ENCODE measurements at regions of chr4 and their contacts with region 1.

Region 1: DNA sequence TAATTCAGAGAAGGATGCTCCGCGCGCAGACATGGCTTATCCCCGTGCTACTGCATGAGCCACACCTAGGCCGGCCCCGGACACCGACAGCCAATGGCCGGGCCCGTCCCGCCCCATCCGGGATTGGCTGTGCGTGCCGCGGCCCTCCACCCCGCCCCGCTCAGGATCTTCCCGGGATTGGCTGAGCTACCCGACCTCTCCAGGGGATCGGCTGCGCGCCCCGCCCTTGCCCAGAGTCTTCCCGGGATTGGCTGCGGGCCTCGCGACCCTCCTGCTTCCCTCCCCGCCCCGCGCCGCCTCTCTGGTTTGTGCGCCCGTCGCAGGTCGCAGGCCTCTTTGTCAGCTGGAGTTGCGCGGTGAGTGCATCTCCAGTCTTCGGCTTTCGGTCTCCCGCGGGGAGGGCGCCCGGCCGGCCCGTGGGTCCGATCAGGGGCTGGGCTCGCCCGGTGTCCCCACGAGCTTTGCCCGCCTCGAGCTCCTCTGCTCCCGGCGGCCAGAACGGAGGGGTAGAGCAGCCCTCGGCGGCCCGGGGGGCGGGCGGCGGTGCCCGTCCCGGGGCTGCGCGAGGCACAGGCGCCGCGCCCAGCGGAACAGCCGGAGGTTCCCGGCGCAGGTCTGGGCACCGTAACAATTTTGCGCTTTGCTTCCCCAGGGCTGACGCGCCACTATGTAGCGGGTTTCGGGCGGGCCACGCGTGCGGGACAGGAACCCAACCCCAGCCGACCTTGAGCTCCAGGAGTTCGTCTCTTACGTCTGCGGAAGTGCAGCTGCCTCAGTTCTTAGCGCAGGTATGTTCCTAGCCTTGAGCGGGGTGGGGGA is 38.8 kb downstream of the ERVMER34-1 start:
- DNase-seq: peak; percentile 81 to 97 (median 95)
- ATAC-seq: peak; percentile 96
- H3K4me3 ChIP-seq: peak overlapping the region; percentile 73
- H3K4me3 Mint-ChIP-seq: peak overlapping the region; percentile 82 to 96 (median 92)
- H3K27ac ChIP-seq: peak overlapping the region; percentile 81
- H3K27ac Mint-ChIP-seq: peak overlapping the region; percentile 87 to 98 (median 96)
- H3K4me1 ChIP-seq: peaks cover 23 to 24% of the 10 kb centered on the region in 2 donors
- H3K4me1 Mint-ChIP-seq: peaks cover 23 to 46% (median 38%) of the 10 kb centered on the region in 7 donors
- H3K27me3 ChIP-seq: no peaks in the 10 kb centered on the region
- H3K27me3 Mint-ChIP-seq: peaks cover 0 to under 1% (median 0%) of the 10 kb centered on the region in 5 donors

Region 2: DNA sequence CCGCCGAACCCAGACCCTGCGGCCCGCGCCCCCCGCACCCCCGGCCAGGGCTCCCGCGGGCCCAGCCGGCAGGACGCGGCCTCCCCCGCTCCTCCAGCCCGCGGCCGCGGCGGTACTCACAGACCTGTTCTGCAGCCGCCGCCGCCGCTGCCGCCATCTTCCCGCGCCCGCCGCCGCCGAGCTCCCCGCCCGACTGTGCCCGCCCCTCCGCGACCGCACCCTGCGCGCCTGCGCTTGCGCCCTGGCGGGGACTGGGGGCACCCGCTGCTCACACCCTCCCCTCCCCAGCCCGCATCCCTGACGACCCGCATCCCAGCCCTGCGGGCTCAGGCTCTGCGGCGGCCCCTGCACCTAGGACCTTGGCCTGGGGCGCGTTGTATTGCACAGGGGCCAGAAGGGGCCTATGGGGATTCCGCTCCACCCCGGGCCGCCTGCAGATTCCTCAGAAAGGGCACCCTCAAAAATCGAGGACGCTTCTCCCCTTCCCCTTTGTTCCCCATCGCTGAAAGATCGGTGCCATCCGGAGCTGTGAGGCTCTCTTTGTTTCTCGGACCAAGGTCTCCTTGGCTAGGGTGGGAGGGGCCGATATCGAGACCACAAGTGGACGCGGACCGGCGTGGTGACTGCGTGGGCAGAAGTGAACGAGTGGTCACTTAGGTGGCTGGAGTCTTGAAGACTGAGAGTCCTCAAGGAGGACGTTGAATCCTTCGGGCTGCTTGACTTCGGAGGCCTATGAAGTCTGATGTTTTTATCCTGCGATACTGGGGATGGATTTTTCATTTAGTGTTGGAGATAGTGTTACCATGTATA is 674.1 kb before region 1 on chr4 and contains the start of gene SGCB:
- CTCF ChIA-PET with region 1: no interaction called
- POLR2A ChIA-PET with region 1: interaction called, 3 read pairs
- intact Hi-C with region 1: loop called in 1 of 2 experiments (anchors 10 kb)
- DNase-seq: peak; percentile 55 to 82 (median 69)
- ATAC-seq: peak; percentile 93
- H3K4me3 ChIP-seq: peak within 1 kb of the TSS; percentile 61
- H3K4me3 Mint-ChIP-seq: peak within 1 kb of the TSS; percentile 81 to 92 (median 89)
- H3K27ac ChIP-seq: peak within 1 kb of the TSS; percentile 38
- H3K27ac Mint-ChIP-seq: peak within 1 kb of the TSS; percentile 48 to 79 (median 76)
- H3K4me1 ChIP-seq: peaks cover 0 to 5% of the 10 kb centered on the region in 2 donors
- H3K4me1 Mint-ChIP-seq: peaks cover 18 to 37% (median 26%) of the 10 kb centered on the region in 7 donors
- H3K27me3 ChIP-seq: no peaks in the 10 kb centered on the region
- H3K27me3 Mint-ChIP-seq: peaks cover 20 to 41% (median 34%) of the 10 kb centered on the region in 5 donors
- total RNA-seq, gene SGCB: 3.6 to 11.6 (median 4.5) TPM

Region 3: GRCh38 chr4:52659001-52659721 is 53.2 kb before region 1 on chr4 and contains the start of gene USP46:
- CTCF ChIA-PET with region 1: no interaction called
- POLR2A ChIA-PET with region 1: interaction called, 4 read pairs
- intact Hi-C with region 1: loop called (anchors 1 kb)
- DNase-seq: peak in 7 of 9 donors; percentile 3 to 65 (median 15)
- ATAC-seq: peak; percentile 86
- H3K4me3 ChIP-seq: peak within 1 kb of the TSS; percentile 52
- H3K4me3 Mint-ChIP-seq: peak within 1 kb of the TSS; percentile 83 to 92 (median 87)
- H3K27ac ChIP-seq: peak within 1 kb of the TSS; percentile 37
- H3K27ac Mint-ChIP-seq: peak within 1 kb of the TSS in 6 of 9 donors; percentile 12 to 77 (median 58)
- H3K4me1 ChIP-seq: peaks cover 5% of the 10 kb centered on the region in 2 donors
- H3K4me1 Mint-ChIP-seq: peaks cover 12 to 23% (median 17%) of the 10 kb centered on the region in 7 donors
- H3K27me3 ChIP-seq: no peaks in the 10 kb centered on the region
- H3K27me3 Mint-ChIP-seq: peaks cover 0 to 24% (median 16%) of the 10 kb centered on the region in 5 donors
- total RNA-seq, gene USP46: 3.0 to 11.7 (median 4.0) TPM

Region 4: GRCh38 chr4:53365486-53366300 is 653.3 kb after region 1 on chr4 and contains the start of gene SCFD2:
- CTCF ChIA-PET with region 1: no interaction called
- POLR2A ChIA-PET with region 1: no interaction called
- intact Hi-C with region 1: loop called in 1 of 2 experiments (anchors 2 kb)
- DNase-seq: peak; percentile 86 to 97 (median 94)
- ATAC-seq: peak; percentile 99
- H3K4me3 ChIP-seq: peak within 1 kb of the TSS; percentile 72
- H3K4me3 Mint-ChIP-seq: peak within 1 kb of the TSS; percentile 92 to 99 (median 96)
- H3K27ac ChIP-seq: peak within 1 kb of the TSS; percentile 85
- H3K27ac Mint-ChIP-seq: peak within 1 kb of the TSS; percentile 95 to 99 (median 96)
- H3K4me1 ChIP-seq: peaks cover 7 to 23% of the 10 kb centered on the region in 2 donors
- H3K4me1 Mint-ChIP-seq: peaks cover 32 to 64% (median 50%) of the 10 kb centered on the region in 7 donors
- H3K27me3 ChIP-seq: no peaks in the 10 kb centered on the region
- H3K27me3 Mint-ChIP-seq: peaks cover 0 to 20% (median 3%) of the 10 kb centered on the region in 5 donors
- total RNA-seq, gene SCFD2: 13.4 to 32.8 (median 28.0) TPM

Region 5: DNA sequence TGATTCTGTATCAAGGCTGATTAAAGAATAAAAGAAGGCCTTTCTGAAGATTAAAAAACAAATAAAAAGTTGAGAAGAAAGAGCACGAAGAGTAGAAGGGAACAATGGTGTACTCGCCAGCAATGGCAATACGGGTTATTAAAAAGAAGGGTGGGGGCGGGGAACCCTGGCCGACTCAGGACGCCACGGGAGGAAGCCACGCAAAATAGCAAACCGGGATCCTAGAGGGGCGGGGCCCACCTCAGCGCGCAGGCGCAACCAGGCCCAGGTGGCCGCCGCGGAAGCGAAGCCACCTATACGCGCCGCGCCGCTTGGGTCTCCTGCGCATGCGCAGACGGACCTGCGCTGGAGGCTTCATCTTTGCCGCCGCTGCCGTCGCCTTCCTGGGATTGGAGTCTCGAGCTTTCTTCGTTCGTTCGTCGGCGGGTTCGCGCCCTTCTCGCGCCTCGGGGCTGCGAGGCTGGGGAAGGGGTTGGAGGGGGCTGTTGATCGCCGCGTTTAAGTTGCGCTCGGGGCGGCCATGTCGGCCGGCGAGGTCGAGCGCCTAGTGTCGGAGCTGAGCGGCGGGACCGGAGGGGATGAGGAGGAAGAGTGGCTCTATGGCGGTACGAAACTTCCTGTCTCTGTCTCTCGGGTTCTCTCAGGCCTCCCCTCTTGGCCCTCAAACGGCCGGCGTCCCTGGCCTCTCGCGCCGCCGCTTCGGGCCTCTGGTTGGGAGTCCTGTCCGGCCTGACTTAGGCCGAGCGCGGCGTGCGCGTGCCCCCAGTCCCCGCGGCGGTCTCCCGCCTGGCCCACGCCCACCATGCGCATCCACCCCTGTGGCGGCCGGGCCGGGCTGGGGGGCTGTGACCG is 665.2 kb after region 1 on chr4 and contains the start of gene FIP1L1:
- CTCF ChIA-PET with region 1: no interaction called
- POLR2A ChIA-PET with region 1: interaction called, 7 read pairs
- intact Hi-C with region 1: loop called in 1 of 2 experiments (anchors 2 kb)
- DNase-seq: peak; percentile 92 to 97 (median 96)
- ATAC-seq: peak; percentile 97
- H3K4me3 ChIP-seq: peak within 1 kb of the TSS; percentile 85
- H3K4me3 Mint-ChIP-seq: peak within 1 kb of the TSS; percentile 94 to 100 (median 99)
- H3K27ac ChIP-seq: peak within 1 kb of the TSS; percentile 89
- H3K27ac Mint-ChIP-seq: peak within 1 kb of the TSS; percentile 97 to 100 (median 99)
- H3K4me1 ChIP-seq: peaks cover 17 to 21% of the 10 kb centered on the region in 2 donors
- H3K4me1 Mint-ChIP-seq: peaks cover 20 to 53% (median 37%) of the 10 kb centered on the region in 7 donors
- H3K27me3 ChIP-seq: no peaks in the 10 kb centered on the region
- H3K27me3 Mint-ChIP-seq: peaks cover 0 to 15% (median 4%) of the 10 kb centered on the region in 5 donors
- total RNA-seq, gene FIP1L1: 57.1 to 91.0 (median 78.7) TPM

Measured in naive thymus-derived CD4-positive, alpha-beta T cell (primary cell).